Psoas muscle (tissue), 8 donors: ENCODE measurements at regions of chr1 and their contacts with region 1.

Region 1: GRCh38 chr1:46352363-46352762 is 11.8 kb downstream of the NSUN4 start:
- DNase-seq: no peak
- ATAC-seq: no peak
- H3K4me3 ChIP-seq: no peak overlapping the region
- H3K27ac ChIP-seq: no peak overlapping the region
- H3K4me1 ChIP-seq: peaks cover 4% of the 10 kb centered on the region
- H3K27me3 ChIP-seq: no peaks in the 10 kb centered on the region
- CTCF ChIP-seq: no peak

Region 2: DNA sequence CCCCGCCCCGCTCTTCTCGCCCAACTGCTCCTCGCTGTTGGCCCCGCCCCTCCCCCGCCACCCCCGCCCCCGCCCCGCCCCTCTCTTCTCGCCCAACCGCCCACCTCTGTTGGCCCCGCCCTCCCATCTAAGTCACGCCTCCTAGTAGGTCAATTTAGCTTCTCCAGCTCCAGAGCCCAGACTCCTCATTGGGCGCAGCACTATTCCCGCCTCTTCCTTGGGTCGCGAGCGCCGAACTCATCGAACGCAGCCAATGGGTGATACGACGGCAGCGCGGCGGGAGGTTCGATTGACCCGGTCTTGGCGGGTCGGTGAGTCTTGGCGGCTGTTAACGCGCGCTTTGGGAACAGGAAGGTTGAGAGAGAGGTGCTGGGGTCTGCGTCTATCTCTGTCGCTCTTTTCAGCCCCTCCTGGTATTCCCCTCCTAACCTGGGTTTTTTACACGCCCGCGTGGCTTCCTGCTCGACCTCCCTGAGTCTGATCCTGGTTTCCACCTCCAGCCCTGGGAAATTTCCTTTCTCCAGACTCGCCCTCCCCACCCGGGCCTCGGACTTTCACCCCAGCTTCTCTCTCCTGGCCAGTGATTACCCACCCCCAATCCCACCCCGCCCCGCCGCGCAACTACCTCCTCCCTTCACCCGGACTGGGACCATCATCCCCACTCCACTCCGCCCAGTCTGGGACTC is 104.8 kb before region 1 on chr1 and contains the start of gene RAD54L:
- intact Hi-C with region 1: loop called in 1 of 2 experiments (anchors 10 kb)
- DNase-seq: peak; percentile 98 to 99
- ATAC-seq: peak; percentile 97 to 98 (median 97)
- H3K4me3 ChIP-seq: peak within 1 kb of the TSS; percentile 75
- H3K27ac ChIP-seq: peak within 1 kb of the TSS; percentile 70
- H3K4me1 ChIP-seq: no peaks in the 10 kb centered on the region
- H3K27me3 ChIP-seq: no peaks in the 10 kb centered on the region
- CTCF ChIP-seq: no peak
- total RNA-seq, gene RAD54L: 0.25 TPM in 1 of 4 donors, not detected in the others